ENCODE measurements at regions of chr2 and their contacts with region 1.

Region 1: GRCh38 chr2:139790807-139791752 is 1010.9 kb upstream of the NXPH2 start:
- DNase-seq: no peak
- ATAC-seq: no peak
- H3K4me3 ChIP-seq: no peak overlapping the region
- H3K4me3 Mint-ChIP-seq: no peak overlapping the region
- H3K27ac ChIP-seq: no peak overlapping the region
- H3K27ac Mint-ChIP-seq: no peak overlapping the region
- H3K4me1 ChIP-seq: no peaks in the 10 kb centered on the region
- H3K4me1 Mint-ChIP-seq: no peaks in the 10 kb centered on the region
- H3K27me3 ChIP-seq: no peaks in the 10 kb centered on the region
- H3K27me3 Mint-ChIP-seq: no peaks in the 10 kb centered on the region
- CTCF ChIP-seq: no peak

Region 2: DNA sequence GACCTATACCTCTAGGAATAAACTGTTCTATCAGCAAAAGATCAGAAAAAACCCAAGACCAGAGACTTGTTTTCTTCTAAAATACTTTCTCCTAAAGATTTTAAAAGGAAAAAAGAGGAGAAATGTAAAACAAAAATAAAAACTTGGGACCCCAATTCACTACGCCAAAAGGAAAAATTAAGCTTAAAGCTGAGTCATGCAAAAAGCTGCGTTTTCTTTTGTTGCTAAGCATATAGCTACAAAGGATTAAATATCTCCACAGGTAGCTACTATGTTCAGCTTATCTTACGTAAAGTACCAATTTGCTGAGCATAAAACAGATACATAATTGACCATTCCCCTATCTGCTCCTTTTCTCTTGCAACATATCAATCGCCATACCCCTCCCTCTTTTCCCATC is 60.9 kb before region 1 on chr2:
- CTCF ChIA-PET with region 1: no interaction called
- POLR2A ChIA-PET with region 1: no interaction called
- intact Hi-C with region 1: no loop called
- DNase-seq: no peak
- ATAC-seq: no peak
- H3K4me3 ChIP-seq: no peak overlapping the region
- H3K4me3 Mint-ChIP-seq: no peak overlapping the region
- H3K27ac ChIP-seq: no peak overlapping the region
- H3K27ac Mint-ChIP-seq: no peak overlapping the region
- H3K4me1 ChIP-seq: no peaks in the 10 kb centered on the region
- H3K4me1 Mint-ChIP-seq: no peaks in the 10 kb centered on the region
- H3K27me3 ChIP-seq: no peaks in the 10 kb centered on the region
- H3K27me3 Mint-ChIP-seq: no peaks in the 10 kb centered on the region
- CTCF ChIP-seq: no peak

Region 3: GRCh38 chr2:139805441-139805840 is 14.4 kb after region 1 on chr2:
- CTCF ChIA-PET with region 1: no interaction called
- POLR2A ChIA-PET with region 1: no interaction called
- intact Hi-C with region 1: loop called in 1 of 2 experiments (anchors 2 kb)
- DNase-seq: no peak
- ATAC-seq: no peak
- H3K4me3 ChIP-seq: no peak overlapping the region
- H3K4me3 Mint-ChIP-seq: no peak overlapping the region
- H3K27ac ChIP-seq: no peak overlapping the region
- H3K27ac Mint-ChIP-seq: no peak overlapping the region
- H3K4me1 ChIP-seq: no peaks in the 10 kb centered on the region
- H3K4me1 Mint-ChIP-seq: no peaks in the 10 kb centered on the region
- H3K27me3 ChIP-seq: no peaks in the 10 kb centered on the region
- H3K27me3 Mint-ChIP-seq: no peaks in the 10 kb centered on the region
- CTCF ChIP-seq: no peak

Measured in CD8-positive, alpha-beta T cell (primary cell).